Mammary epithelial cell (primary cell): ENCODE measurements at regions of chr9 and their contacts with region 1.

Region 1: GRCh38 chr9:113511856-113512761 is 48.6 kb downstream of the RGS3 start:
- DNase-seq: peak; percentile 3
- H3K4me3 ChIP-seq: no peak overlapping the region
- H3K27ac ChIP-seq: no peak overlapping the region
- H3K4me1 ChIP-seq: peaks cover 4% of the 10 kb centered on the region
- H3K27me3 ChIP-seq: no peaks in the 10 kb centered on the region
- CTCF ChIP-seq: no peak

Region 2: DNA sequence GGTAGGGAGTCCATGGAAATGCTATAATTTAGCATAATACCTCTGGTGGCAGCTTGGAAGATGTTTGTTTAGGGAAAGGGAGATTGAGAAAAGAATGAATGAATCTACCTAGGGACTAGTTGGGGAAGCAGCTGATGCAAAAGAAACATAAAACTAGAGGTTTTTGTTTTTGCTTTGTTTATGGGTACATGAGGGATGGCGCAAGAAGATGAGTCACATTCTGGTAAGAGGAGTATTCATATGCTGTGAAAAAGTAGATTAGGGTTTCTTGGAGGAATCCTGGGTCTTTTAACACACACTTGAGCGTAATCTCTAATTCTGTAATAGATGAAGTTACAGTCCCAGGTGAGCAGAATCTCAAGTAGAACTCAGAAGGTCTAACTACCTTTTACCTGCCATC is 84.5 kb before region 1 on chr9:
- CTCF ChIA-PET with region 1: no interaction called
- dilution Hi-C with region 1: loop called (anchors 5 kb)
- in situ Hi-C with region 1: no loop called
- intact Hi-C with region 1: no loop called
- DNase-seq: peak; percentile 36
- H3K4me3 ChIP-seq: no peak overlapping the region
- H3K27ac ChIP-seq: no peak overlapping the region
- H3K4me1 ChIP-seq: no peaks in the 10 kb centered on the region
- H3K27me3 ChIP-seq: no peaks in the 10 kb centered on the region
- CTCF ChIP-seq: no peak

Region 3: GRCh38 chr9:113463418-113464285 is 48.5 kb before region 1 on chr9 and contains the start of gene RGS3:
- CTCF ChIA-PET with region 1: interaction called, 8 read pairs
- dilution Hi-C with region 1: loop called (anchors 5 kb)
- in situ Hi-C with region 1: no loop called
- intact Hi-C with region 1: no loop called
- DNase-seq: peak; percentile 29
- H3K4me3 ChIP-seq: peak within 1 kb of the TSS in 1 of 3 experiments; percentile 32
- H3K27ac ChIP-seq: no peak within 1 kb of the TSS
- H3K4me1 ChIP-seq: peaks cover 8% of the 10 kb centered on the region
- H3K27me3 ChIP-seq: peaks cover 12% of the 10 kb centered on the region
- CTCF ChIP-seq: no peak
- total RNA-seq, gene RGS3: 52.2 to 63.5 TPM